HEK293T (cell line): ENCODE measurements at regions of chr17 and their contacts with region 1.

Region 1: DNA sequence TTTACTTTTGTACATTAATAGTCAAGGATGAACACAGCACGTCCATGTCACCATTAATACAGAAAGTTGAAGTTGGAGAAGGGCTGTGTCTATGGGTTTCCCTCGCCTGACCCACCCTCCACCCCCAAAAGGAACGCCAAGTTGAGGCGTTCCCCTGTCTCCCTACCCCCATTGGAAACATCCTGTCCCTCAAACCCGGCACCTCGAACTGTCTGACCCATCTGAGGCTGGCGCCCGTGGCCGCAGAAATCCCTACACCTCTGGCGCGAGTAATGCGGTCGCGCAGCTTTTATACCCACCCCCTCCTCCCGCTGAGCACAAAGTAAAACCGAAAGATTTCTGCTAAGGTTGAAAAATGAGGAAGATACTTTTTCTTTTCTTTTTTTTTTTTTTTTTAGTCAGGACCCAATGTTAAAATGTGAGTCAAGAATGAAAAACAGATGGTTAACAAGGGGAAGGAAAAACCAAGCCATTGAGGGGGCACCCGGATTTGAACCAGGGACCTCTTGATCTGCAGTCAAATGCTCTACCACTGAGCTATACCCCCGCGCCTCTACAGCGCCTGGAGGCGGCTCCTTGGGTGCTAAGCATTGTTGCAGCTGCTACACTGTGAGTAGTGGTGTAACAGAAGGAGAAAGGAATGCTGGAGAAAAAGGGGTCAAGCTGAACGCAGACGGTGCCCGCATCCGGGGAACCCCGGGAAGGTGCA is 887 bp upstream of the LASP1 start:
- DNase-seq: peak; percentile 60

Region 2: GRCh38 chr17:38752119-38752929 is 116.6 kb before region 1 on chr17 and contains the start of gene PSMB3:
- CTCF ChIA-PET with region 1: no interaction called
- POLR2A ChIA-PET with region 1: interaction called, 15 read pairs
- DNase-seq: peak; percentile 87

Region 3: DNA sequence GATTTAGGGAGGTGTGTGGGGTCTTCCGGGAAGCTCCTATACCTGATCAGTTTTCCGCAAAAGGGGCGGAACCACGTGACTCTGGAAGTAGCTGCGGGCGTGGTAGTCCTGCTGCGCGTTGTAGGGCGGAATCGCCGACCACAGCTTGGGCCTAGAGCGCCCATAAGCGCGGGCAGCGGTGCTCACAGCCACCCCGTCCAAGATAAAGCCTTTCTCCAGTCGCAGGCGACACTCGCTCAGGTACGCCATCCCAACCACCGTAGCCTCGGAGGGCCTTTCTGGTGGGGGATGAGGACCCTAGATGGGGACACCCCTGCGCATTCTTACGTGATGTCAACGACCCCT is 27.9 kb before region 1 on chr17:
- CTCF ChIA-PET with region 1: no interaction called
- POLR2A ChIA-PET with region 1: interaction called, 21 read pairs
- DNase-seq: no peak

Region 4: DNA sequence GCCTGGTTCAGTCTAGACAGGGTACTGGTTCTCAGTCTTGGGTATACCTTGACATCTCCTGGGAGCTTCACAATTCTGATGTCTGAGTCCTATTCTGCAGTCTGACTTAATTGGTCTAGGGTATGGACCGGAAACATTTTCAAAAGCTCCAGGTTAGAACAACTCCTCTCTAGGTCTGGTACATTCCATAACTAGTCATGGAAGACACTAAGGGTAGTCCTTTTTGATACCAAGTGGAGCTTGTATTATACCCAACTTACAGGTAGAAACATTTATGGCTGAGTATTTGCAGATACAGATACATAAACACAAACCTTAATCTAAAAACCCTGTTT is 20.4 kb before region 1 on chr17:
- CTCF ChIA-PET with region 1: interaction called, 6 read pairs
- POLR2A ChIA-PET with region 1: interaction called, 125 read pairs
- DNase-seq: no peak

Region 5: GRCh38 chr17:38853292-38854219 is 15.4 kb before region 1 on chr17 and contains the start of gene RPL23:
- CTCF ChIA-PET with region 1: interaction called, 6 read pairs
- POLR2A ChIA-PET with region 1: interaction called, 125 read pairs
- DNase-seq: peak; percentile 80

Region 6: DNA sequence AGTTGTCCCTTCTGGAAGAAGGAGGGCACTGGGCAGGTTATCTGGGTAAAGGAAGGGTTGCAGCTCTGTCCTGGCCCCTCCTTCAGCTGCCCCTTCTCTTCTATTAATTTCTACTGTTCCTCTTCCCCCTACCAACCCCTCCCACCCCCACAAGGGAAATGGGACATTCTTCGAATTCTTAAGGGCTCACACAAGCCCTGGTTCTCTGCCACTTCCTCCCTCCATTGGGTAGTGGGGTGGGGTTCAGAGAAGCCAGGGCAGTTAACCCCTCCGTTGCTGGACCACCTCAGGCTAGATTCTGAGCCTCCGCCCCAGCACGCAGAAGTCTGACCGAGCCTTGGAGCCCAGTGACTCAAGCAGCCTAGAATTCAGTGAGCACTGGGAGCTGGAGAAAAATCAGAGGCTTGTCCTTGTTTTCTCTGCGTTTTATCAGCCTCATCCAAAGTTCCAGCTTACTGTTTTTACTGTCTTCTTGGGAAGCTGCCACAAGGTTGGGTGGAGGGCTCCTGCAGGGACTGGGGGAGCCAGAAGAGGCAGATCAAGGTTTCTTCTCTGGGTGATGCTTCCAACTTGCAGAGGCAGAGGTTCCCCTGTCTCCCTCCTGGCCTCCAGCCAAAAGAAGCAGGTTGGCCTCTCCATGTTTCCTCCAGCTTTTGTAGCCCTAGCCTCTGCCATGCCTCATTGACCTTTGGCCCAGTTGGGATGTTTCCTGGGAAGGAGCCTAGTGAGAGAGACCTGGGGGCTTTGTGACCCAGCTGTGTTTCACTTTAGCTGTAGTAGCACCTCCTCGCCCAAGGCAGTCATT is 11.1 kb after region 1 on chr17:
- CTCF ChIA-PET with region 1: interaction called, 3 read pairs
- POLR2A ChIA-PET with region 1: interaction called, 42 read pairs
- DNase-seq: no peak

Region 7: GRCh38 chr17:39001703-39002637 is 133.0 kb after region 1 on chr17:
- CTCF ChIA-PET with region 1: no interaction called
- POLR2A ChIA-PET with region 1: no interaction called
- DNase-seq: no peak

Region 8: DNA sequence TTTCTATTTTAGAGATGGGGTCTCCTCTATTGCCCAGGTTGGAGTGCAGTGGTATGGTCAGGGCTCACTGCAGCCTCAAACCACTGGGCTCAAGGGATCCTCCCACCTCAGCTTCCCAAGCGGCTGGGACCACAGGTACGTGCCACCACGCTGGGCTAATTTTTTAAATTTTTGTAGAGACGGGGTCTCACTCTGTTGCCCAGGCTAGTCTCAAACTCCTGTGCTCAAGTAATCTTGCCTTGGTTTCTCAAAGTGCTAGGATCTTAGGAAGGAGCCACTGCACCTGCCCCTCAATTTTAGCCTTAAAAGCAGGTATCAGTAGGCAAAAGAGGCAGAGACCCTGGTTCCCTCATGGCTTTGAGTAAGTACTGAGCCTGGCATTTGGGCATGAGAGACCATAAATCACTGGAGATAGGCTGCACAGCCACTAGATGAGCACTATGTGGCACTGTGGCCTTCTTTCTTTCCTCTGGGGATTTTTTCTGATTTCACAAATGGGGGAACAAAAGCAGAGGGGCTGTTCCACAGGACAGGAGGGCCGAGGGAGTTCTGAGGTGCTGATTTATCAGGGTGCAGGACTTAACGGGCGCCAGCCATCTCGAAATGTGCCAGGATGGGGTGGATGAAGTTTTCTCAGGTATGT is 200.3 kb after region 1 on chr17:
- CTCF ChIA-PET with region 1: no interaction called
- POLR2A ChIA-PET with region 1: no interaction called
- DNase-seq: peak; percentile 42

Region 9: DNA sequence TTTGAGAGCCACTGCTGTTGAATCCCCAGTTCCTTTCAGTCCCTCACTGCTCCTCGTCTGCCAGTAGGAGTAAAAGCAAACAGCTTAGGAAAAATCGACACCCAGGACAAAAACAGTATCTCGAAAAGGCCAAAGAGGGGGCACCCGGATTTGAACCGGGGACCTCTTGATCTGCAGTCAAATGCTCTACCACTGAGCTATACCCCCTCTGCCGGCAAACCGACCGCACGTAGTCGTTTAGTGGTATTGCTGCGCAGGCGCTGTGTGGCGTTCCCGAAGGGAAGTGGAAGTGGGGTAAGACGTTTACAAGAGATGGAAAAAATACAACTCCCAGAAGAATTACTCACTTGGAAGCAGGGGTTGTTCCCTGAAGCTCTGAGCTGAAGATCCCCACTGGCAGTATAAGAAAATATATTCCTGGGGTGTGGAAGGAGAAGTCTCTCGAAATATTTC is 284.7 kb after region 1 on chr17:
- CTCF ChIA-PET with region 1: interaction called, 3 read pairs
- POLR2A ChIA-PET with region 1: interaction called, 14 read pairs
- DNase-seq: peak; percentile 65